Activated T-helper 2 cell treated with anti-CD3 and anti-CD28 coated beads, Interferon-gamma antibody, Interleukin-2, Interleukin-4, amounts not matched to agents 10 μg/mL and 5 μg/mL and 100 μg/mL, durations not matched to agents 14 hours and 24 hours and 36 hours (primary cell): ENCODE measurements at regions of chr12 and their contacts with region 1.

Region 1: DNA sequence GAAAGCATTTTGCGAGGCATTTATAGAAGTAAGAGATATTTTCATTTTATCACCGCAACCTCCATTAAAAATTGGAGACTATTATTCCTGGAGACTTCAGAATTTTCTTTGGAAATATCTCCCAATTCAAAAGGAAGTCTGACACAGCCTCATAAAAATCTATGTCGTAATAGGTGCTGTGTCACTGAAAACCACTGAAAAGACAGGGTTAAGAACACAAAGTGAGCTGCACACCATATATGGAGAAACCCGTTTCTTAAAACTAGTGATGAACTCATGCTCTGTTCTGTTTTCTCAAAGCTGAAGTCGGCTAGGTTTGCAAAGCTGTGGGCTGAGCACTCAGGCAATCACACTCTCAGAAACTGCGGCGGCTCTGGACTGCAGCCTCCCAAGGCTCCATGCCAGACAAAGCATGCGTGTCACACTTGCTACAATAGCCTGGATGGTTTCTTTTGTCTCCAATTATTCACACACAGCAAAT is at the start of gene GLIPR1:
- DNase-seq: peak; percentile 64
- H3K4me3 Mint-ChIP-seq: peak within 1 kb of the TSS; percentile 87
- H3K27ac Mint-ChIP-seq: peak within 1 kb of the TSS; percentile 92
- H3K4me1 Mint-ChIP-seq: peaks cover 73% of the 10 kb centered on the region
- H3K27me3 Mint-ChIP-seq: peaks cover 1% of the 10 kb centered on the region
- total RNA-seq, gene GLIPR1: 7.4 and 7.6 TPM in 2 replicates

Region 2: DNA sequence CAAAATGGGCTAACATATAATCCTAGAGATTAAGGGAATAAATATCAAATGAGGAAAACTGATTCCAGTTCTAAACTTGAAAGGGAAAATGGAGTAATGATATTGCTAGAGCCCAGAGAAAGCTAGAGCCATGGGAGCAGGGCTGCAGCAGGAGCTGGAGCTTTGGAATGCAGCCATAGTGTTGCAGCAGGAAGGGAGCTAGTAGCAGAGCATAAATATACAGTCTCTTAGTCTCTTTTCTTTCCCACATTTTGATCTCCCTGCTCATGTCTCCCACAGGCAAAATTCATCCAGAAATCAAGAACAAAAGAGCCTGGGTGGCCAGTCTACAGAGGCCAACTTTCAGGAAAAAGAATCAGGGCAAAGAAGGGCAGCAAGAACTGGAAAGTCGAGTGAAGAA is 689.1 kb before region 1 on chr12:
- intact Hi-C with region 1: no loop called
- DNase-seq: no peak
- H3K4me3 Mint-ChIP-seq: no peak overlapping the region
- H3K27ac Mint-ChIP-seq: no peak overlapping the region
- H3K4me1 Mint-ChIP-seq: no peaks in the 10 kb centered on the region
- H3K27me3 Mint-ChIP-seq: no peaks in the 10 kb centered on the region

Region 3: GRCh38 chr12:75334384-75335030 is 146.0 kb before region 1 on chr12 and contains the start of gene GLIPR1L1:
- intact Hi-C with region 1: loop called (anchors 1 kb)
- DNase-seq: peak; percentile 68
- H3K4me3 Mint-ChIP-seq: peak within 1 kb of the TSS; percentile 73
- H3K27ac Mint-ChIP-seq: no peak within 1 kb of the TSS
- H3K4me1 Mint-ChIP-seq: peaks cover 23% of the 10 kb centered on the region
- H3K27me3 Mint-ChIP-seq: peaks cover 52% of the 10 kb centered on the region
- total RNA-seq, gene GLIPR1L1: not detected in 2 replicates

Region 4: GRCh38 chr12:75390899-75391538 is 89.5 kb before region 1 on chr12 and contains the start of gene GLIPR1L2:
- intact Hi-C with region 1: loop called (anchors 1 kb)
- DNase-seq: peak; percentile 82
- H3K4me3 Mint-ChIP-seq: peak within 1 kb of the TSS; percentile 87
- H3K27ac Mint-ChIP-seq: peak within 1 kb of the TSS; percentile 86
- H3K4me1 Mint-ChIP-seq: peaks cover 27% of the 10 kb centered on the region
- H3K27me3 Mint-ChIP-seq: no peaks in the 10 kb centered on the region
- total RNA-seq, gene GLIPR1L2: not detected in 2 replicates

Region 5: GRCh38 chr12:75641031-75641780 is 160.7 kb after region 1 on chr12:
- intact Hi-C with region 1: loop called (anchors 5 kb)
- DNase-seq: peak; percentile 27
- H3K4me3 Mint-ChIP-seq: no peak overlapping the region
- H3K27ac Mint-ChIP-seq: peak overlapping the region; percentile 76
- H3K4me1 Mint-ChIP-seq: peaks cover 46% of the 10 kb centered on the region
- H3K27me3 Mint-ChIP-seq: peaks cover 12% of the 10 kb centered on the region

Region 6: GRCh38 chr12:76020731-76021672 is 540.5 kb after region 1 on chr12:
- intact Hi-C with region 1: loop called (anchors 1 kb)
- DNase-seq: peak; percentile 67
- H3K4me3 Mint-ChIP-seq: peak overlapping the region; percentile 66
- H3K27ac Mint-ChIP-seq: peak overlapping the region; percentile 99
- H3K4me1 Mint-ChIP-seq: peaks cover 60% of the 10 kb centered on the region
- H3K27me3 Mint-ChIP-seq: no peaks in the 10 kb centered on the region

Region 7: GRCh38 chr12:76455582-76456345 is 975.3 kb after region 1 on chr12:
- intact Hi-C with region 1: loop called (anchors 10 kb)
- DNase-seq: no peak
- H3K4me3 Mint-ChIP-seq: no peak overlapping the region
- H3K27ac Mint-ChIP-seq: no peak overlapping the region
- H3K4me1 Mint-ChIP-seq: peaks cover 8% of the 10 kb centered on the region
- H3K27me3 Mint-ChIP-seq: no peaks in the 10 kb centered on the region